ENCODE measurements at regions of chr16 and their contacts with region 1.

Region 1: DNA sequence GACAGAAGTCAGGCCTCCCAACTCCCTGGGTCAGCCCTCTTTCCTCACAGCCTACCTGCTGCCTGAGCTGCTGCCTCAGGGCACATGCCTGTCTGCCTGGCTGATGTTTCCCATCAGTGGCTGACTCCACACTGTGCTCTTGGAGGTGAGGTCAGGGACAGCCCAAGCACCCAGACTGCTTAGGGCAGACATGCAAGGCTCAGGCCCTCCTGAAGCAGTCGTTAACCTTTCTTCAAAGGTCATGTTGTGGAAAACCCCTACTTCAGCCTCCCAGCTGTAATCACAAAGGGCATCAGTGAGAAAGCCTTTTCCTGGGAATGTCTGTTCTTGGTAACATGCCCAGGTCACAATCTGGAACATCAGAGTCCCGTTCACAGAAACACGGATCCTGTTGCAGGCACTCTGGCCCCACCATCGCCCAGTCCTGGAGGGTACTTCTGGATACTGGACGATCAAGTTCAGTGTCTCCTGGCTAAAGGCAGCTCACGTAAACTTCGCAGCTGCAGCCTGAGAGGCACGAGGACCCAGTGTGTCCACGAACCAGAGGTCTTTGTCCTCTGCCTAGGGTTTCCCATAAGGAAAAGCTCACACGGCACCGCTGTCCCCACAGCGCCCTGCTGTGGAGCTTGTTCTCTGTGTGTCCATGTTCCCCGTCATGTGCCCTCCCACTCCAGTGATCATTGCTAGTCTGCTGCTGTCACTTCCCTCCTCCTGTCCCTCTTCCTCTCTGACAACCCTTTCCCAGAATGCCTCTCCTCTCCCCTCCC is 54.9 kb downstream of the GNAO1 start:
- DNase-seq: no peak

Region 2: DNA sequence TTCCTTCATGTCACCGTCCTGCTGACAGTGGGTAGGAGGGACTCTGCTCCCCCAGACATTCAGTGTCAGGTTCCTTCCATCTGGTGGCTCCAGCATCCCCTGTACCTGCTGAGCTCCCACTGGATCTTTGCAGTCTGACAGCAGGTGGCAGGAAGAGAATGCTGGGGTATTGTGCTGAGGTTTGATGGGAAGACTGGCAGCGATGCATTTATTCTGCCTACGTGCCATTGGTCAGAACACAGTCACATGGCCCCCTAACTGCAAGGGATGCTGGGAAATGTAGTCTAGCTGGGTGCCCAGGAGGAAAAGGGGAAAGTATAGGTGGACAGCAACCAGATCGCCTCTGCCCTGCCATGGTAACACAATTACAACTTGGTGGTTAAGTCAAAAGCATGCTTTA is 2004.0 kb before region 1 on chr16:
- intact Hi-C with region 1: loop called in 1 of 2 experiments (anchors 10 kb)
- DNase-seq: no peak

Region 3: DNA sequence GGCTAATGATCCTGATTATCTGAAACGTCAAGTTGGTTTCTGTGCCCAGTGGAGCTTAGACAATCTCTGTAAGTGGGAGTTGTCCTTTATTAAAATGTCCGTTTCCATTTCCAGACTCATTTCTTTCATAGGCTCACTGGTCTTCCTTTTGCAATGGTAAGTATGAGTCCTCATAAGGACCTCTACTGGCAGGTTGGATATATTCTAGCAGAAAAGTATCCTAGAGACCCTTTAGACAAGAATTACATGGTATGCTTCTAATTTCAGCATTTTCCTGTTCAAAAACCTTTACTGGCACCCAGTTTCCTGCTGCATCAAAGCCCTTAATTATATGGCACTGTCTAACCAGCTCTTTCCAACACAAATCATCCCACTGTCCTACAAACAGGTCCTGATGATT is 970.7 kb after region 1 on chr16:
- intact Hi-C with region 1: no loop called
- DNase-seq: no peak